WTC11 (cell line): ENCODE measurements at regions of chr15 and their contacts with region 1.

Region 1: DNA sequence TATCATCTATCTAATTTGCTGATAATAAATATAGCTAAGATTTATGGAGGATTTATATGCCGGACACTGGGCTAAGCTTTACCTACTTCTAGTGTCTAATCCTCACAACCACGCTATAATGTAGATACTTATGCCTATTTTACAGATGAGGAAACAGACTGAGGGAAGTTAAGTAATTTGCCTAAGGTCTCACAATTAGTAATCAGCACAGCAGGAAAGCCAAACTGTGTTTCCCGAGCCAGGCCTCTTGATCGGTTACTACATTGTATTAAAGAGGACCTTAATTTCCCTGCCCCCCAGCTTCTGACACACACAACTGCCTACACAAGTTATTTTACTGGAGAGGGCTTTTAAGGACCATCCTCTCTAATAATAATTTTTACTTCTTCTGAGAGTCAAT is 40.9 kb downstream of the ONECUT1 start:
- DNase-seq: no peak
- ATAC-seq: no peak
- H3K4me3 Mint-ChIP-seq: no peak overlapping the region
- H3K27ac Mint-ChIP-seq: peak overlapping the region; percentile 86; the same call in 1 of the 2 replicates
- H3K4me1 Mint-ChIP-seq: peaks cover 84% of the 10 kb centered on the region
- H3K27me3 Mint-ChIP-seq: no peaks in the 10 kb centered on the region
- CTCF ChIP-seq: no peak

Region 2: GRCh38 chr15:52383100-52383588 is 366.1 kb before region 1 on chr15:
- CTCF ChIA-PET with region 1: no interaction called
- POLR2A ChIA-PET with region 1: no interaction called
- DNase-seq: no peak
- ATAC-seq: no peak
- H3K4me3 Mint-ChIP-seq: no peak overlapping the region
- H3K27ac Mint-ChIP-seq: 0 out of 2 replicates have a peak overlapping the region, but pooled peaks have one; percentile 43
- H3K4me1 Mint-ChIP-seq: no peaks in the 10 kb centered on the region
- H3K27me3 Mint-ChIP-seq: no peaks in the 10 kb centered on the region
- CTCF ChIP-seq: no peak

Region 3: GRCh38 chr15:52714968-52715367 is 34.3 kb before region 1 on chr15:
- CTCF ChIA-PET with region 1: no interaction called
- POLR2A ChIA-PET with region 1: no interaction called
- DNase-seq: no peak
- ATAC-seq: no peak
- H3K4me3 Mint-ChIP-seq: no peak overlapping the region
- H3K27ac Mint-ChIP-seq: peak overlapping the region; percentile 38; the same call in 1 of the 2 replicates
- H3K4me1 Mint-ChIP-seq: peaks cover 12% of the 10 kb centered on the region
- H3K27me3 Mint-ChIP-seq: no peaks in the 10 kb centered on the region
- CTCF ChIP-seq: no peak

Region 4: GRCh38 chr15:52765785-52766184 is 16.5 kb after region 1 on chr15:
- CTCF ChIA-PET with region 1: interaction called, 23 read pairs
- POLR2A ChIA-PET with region 1: interaction called, 4 read pairs
- DNase-seq: no peak
- ATAC-seq: peak; percentile 67
- H3K4me3 Mint-ChIP-seq: no peak overlapping the region
- H3K27ac Mint-ChIP-seq: no peak overlapping the region
- H3K4me1 Mint-ChIP-seq: peaks cover 33% of the 10 kb centered on the region
- H3K27me3 Mint-ChIP-seq: no peaks in the 10 kb centered on the region
- CTCF ChIP-seq: no peak